Caco-2 (cell line): ENCODE measurements at regions of chr18 and their contacts with region 1.

Region 1: GRCh38 chr18:42028247-42028832 is 73.3 kb downstream of the PIK3C3 start:
- DNase-seq: peak in 1 of 2 experiments; percentile 24
- H3K4me3 ChIP-seq: no peak overlapping the region
- H3K4me3 Mint-ChIP-seq: no peak overlapping the region
- H3K27ac Mint-ChIP-seq: no peak overlapping the region
- H3K4me1 ChIP-seq: peaks cover 5% of the 10 kb centered on the region; the same call in 1 of the 2 replicates
- H3K4me1 Mint-ChIP-seq: no peaks in the 10 kb centered on the region
- H3K27me3 ChIP-seq: no peaks in the 10 kb centered on the region
- H3K27me3 Mint-ChIP-seq: no peaks in the 10 kb centered on the region
- CTCF ChIP-seq: peak; percentile 49 to 63

Region 2: GRCh38 chr18:41875094-41875780 is 153.1 kb before region 1 on chr18:
- CTCF ChIA-PET with region 1: no interaction called
- POLR2A ChIA-PET with region 1: no interaction called
- intact Hi-C with region 1: no loop called
- DNase-seq: no peak
- H3K4me3 ChIP-seq: no peak overlapping the region
- H3K4me3 Mint-ChIP-seq: no peak overlapping the region
- H3K27ac Mint-ChIP-seq: no peak overlapping the region
- H3K4me1 ChIP-seq: no peaks in the 10 kb centered on the region
- H3K4me1 Mint-ChIP-seq: no peaks in the 10 kb centered on the region
- H3K27me3 ChIP-seq: no peaks in the 10 kb centered on the region
- H3K27me3 Mint-ChIP-seq: no peaks in the 10 kb centered on the region
- CTCF ChIP-seq: no peak

Region 3: GRCh38 chr18:42229211-42230210 is 201.2 kb after region 1 on chr18:
- CTCF ChIA-PET with region 1: no interaction called
- POLR2A ChIA-PET with region 1: no interaction called
- intact Hi-C with region 1: loop called (anchors 5 kb)
- DNase-seq: no peak
- H3K4me3 ChIP-seq: no peak overlapping the region
- H3K4me3 Mint-ChIP-seq: no peak overlapping the region
- H3K27ac Mint-ChIP-seq: no peak overlapping the region
- H3K4me1 ChIP-seq: peaks cover 12% of the 10 kb centered on the region
- H3K4me1 Mint-ChIP-seq: peaks cover 9% of the 10 kb centered on the region
- H3K27me3 ChIP-seq: no peaks in the 10 kb centered on the region
- H3K27me3 Mint-ChIP-seq: no peaks in the 10 kb centered on the region
- CTCF ChIP-seq: no peak

Region 4: GRCh38 chr18:43596105-43596712 is 1567.9 kb after region 1 on chr18:
- CTCF ChIA-PET with region 1: no interaction called
- POLR2A ChIA-PET with region 1: no interaction called
- intact Hi-C with region 1: loop called (anchors 10 kb)
- DNase-seq: no peak
- H3K4me3 ChIP-seq: no peak overlapping the region
- H3K4me3 Mint-ChIP-seq: no peak overlapping the region
- H3K27ac Mint-ChIP-seq: no peak overlapping the region
- H3K4me1 ChIP-seq: no peaks in the 10 kb centered on the region
- H3K4me1 Mint-ChIP-seq: no peaks in the 10 kb centered on the region
- H3K27me3 ChIP-seq: no peaks in the 10 kb centered on the region
- H3K27me3 Mint-ChIP-seq: no peaks in the 10 kb centered on the region
- CTCF ChIP-seq: peak in 1 of 2 experiments; percentile 24